HepG2 (cell line): ENCODE measurements at regions of chr12 and their contacts with region 1.

Region 1: GRCh38 chr12:85424581-85425348 is 144.7 kb downstream of the ALX1 start:
- DNase-seq: peak; percentile 34
- ATAC-seq: peak; percentile 31; the same call in 1 of the 3 replicates
- H3K4me3 ChIP-seq: no peak overlapping the region
- H3K27ac ChIP-seq: no peak overlapping the region
- H3K4me1 ChIP-seq: no peaks in the 10 kb centered on the region
- H3K27me3 ChIP-seq: no peaks in the 10 kb centered on the region
- CTCF ChIP-seq: peak; percentile 44
- EP300 ChIP-seq: no peak
- POLR2A ChIP-seq: no peak
- RAD21 ChIP-seq: no peak

Region 2: GRCh38 chr12:85374981-85375380 is 49.8 kb before region 1 on chr12:
- CTCF ChIA-PET with region 1: no interaction called
- POLR2A ChIA-PET with region 1: no interaction called
- in situ Hi-C with region 1: no loop called
- intact Hi-C with region 1: no loop called
- DNase-seq: no peak
- ATAC-seq: no peak
- H3K4me3 ChIP-seq: no peak overlapping the region
- H3K27ac ChIP-seq: no peak overlapping the region
- H3K4me1 ChIP-seq: peaks cover 5% of the 10 kb centered on the region; the same call in 1 of the 2 replicates
- H3K27me3 ChIP-seq: no peaks in the 10 kb centered on the region
- CTCF ChIP-seq: no peak
- EP300 ChIP-seq: no peak
- POLR2A ChIP-seq: no peak
- RAD21 ChIP-seq: no peak

Region 3: GRCh38 chr12:85448548-85449139 is 23.9 kb after region 1 on chr12:
- CTCF ChIA-PET with region 1: interaction called, 8 read pairs
- POLR2A ChIA-PET with region 1: no interaction called
- in situ Hi-C with region 1: no loop called
- intact Hi-C with region 1: loop called (anchors 1 kb)
- DNase-seq: no peak
- ATAC-seq: no peak
- H3K4me3 ChIP-seq: no peak overlapping the region
- H3K27ac ChIP-seq: no peak overlapping the region
- H3K4me1 ChIP-seq: no peaks in the 10 kb centered on the region
- H3K27me3 ChIP-seq: no peaks in the 10 kb centered on the region
- CTCF ChIP-seq: no peak
- EP300 ChIP-seq: no peak
- POLR2A ChIP-seq: no peak
- RAD21 ChIP-seq: no peak

Region 4: DNA sequence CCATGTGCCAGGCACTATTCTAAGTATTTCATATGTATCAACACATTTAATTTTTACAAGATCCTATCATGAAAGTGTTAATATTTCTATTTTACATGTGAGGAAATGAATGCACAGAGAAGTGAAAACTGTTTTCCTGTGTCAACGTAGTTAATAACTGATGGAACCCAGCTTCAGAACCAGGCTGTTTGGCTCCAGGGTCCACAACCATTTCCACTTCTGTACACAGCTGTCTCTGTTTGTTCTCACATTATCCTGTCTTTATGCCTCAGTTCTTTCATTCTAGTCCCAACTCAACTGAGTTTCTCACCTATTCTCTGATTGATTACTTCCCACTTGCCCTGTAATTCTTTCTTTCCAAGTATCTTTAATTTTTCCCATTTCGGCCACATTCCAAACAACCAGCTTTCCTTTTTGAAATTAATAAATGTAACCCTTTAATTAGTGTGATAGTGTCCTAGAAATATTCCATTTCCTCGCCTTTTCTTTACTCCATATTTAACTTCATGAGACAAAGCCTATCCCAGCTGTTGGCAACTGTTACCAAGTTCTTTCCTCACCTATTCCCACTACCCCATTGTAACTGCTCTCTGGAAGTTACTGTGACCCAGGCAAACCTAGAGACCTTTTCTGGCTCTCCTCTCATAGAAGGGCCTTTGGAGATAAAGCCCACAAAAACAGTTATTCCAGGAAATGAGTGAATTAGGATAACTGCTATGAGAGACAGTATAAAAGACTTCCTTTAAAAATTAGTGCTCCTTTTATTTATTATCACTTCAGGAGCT is 192.7 kb after region 1 on chr12:
- CTCF ChIA-PET with region 1: no interaction called
- POLR2A ChIA-PET with region 1: no interaction called
- in situ Hi-C with region 1: no loop called
- intact Hi-C with region 1: no loop called
- DNase-seq: peak; percentile 10
- ATAC-seq: peak; percentile 99
- H3K4me3 ChIP-seq: no peak overlapping the region
- H3K27ac ChIP-seq: peak overlapping the region; percentile 58
- H3K4me1 ChIP-seq: peaks cover 20% of the 10 kb centered on the region
- H3K27me3 ChIP-seq: no peaks in the 10 kb centered on the region
- CTCF ChIP-seq: no peak
- EP300 ChIP-seq: no peak; a peak in 1 of 4 replicates
- POLR2A ChIP-seq: no peak
- RAD21 ChIP-seq: no peak

Region 5: GRCh38 chr12:85866986-85867776 is 442.4 kb after region 1 on chr12:
- CTCF ChIA-PET with region 1: no interaction called
- POLR2A ChIA-PET with region 1: no interaction called
- in situ Hi-C with region 1: no loop called
- intact Hi-C with region 1: loop called (anchors 2 kb)
- DNase-seq: peak; percentile 48
- ATAC-seq: peak; percentile 84
- H3K4me3 ChIP-seq: no peak overlapping the region
- H3K27ac ChIP-seq: no peak overlapping the region
- H3K4me1 ChIP-seq: no peaks in the 10 kb centered on the region
- H3K27me3 ChIP-seq: no peaks in the 10 kb centered on the region
- CTCF ChIP-seq: peak; percentile 74
- EP300 ChIP-seq: no peak
- POLR2A ChIP-seq: no peak
- RAD21 ChIP-seq: 0 out of 2 replicates have a peak, but pooled peaks have one; percentile 34

Region 6: DNA sequence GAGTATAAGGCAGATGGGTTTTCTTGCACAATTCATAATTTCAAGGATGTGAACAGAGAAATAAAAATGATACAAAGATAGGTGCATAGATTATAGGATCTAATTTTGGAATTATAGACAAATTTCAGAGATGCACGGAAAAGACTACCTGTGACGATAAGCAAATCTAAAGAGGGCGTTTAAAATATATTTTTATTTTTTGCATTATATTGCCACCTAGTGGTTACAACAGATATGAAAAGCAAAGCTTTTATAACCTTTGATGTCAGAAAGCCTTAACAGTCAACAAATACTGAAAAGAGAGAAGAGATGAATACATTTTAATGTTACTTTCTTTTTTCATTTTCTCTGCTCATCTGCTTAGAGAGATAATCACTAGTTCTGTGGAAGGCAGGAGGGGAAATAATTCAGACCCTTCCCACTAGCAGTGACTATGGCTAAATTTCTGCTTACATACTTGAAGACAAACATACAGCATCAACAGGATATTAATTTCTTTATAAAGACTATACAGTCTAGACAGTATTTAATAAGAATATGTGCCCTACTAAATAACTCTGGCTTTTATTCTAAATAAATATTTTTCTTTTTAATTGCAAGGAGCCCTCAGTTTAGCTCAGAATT is 495.7 kb after region 1 on chr12:
- CTCF ChIA-PET with region 1: no interaction called
- POLR2A ChIA-PET with region 1: no interaction called
- in situ Hi-C with region 1: no loop called
- intact Hi-C with region 1: loop called (anchors 1 kb)
- DNase-seq: peak; percentile 12
- ATAC-seq: no peak
- H3K4me3 ChIP-seq: no peak overlapping the region
- H3K27ac ChIP-seq: no peak overlapping the region
- H3K4me1 ChIP-seq: no peaks in the 10 kb centered on the region
- H3K27me3 ChIP-seq: no peaks in the 10 kb centered on the region
- CTCF ChIP-seq: peak; percentile 46
- EP300 ChIP-seq: no peak
- POLR2A ChIP-seq: no peak
- RAD21 ChIP-seq: no peak